ENCODE measurements at regions of chr3 and their contacts with region 1.

Region 1: GRCh38 chr3:43621656-43622432 is at the start of gene ANO10:
- DNase-seq: peak; percentile 85 to 97 (median 95)
- ATAC-seq: peak; percentile 94
- H3K4me3 ChIP-seq: peak within 1 kb of the TSS; percentile 69 to 83
- H3K4me3 Mint-ChIP-seq: peak within 1 kb of the TSS; percentile 87
- H3K27ac ChIP-seq: peak within 1 kb of the TSS; percentile 46
- H3K27ac Mint-ChIP-seq: peak within 1 kb of the TSS; percentile 76
- H3K4me1 ChIP-seq: peaks cover 13% of the 10 kb centered on the region
- H3K4me1 Mint-ChIP-seq: peaks cover 17% of the 10 kb centered on the region
- H3K27me3 ChIP-seq: no peaks in the 10 kb centered on the region
- H3K27me3 Mint-ChIP-seq: no peaks in the 10 kb centered on the region
- CTCF ChIP-seq: no peak
- total RNA-seq, gene ANO10: 6.1 to 7.0 TPM

Region 2: GRCh38 chr3:42012935-42013690 is 1608.7 kb before region 1 on chr3:
- CTCF ChIA-PET with region 1: no interaction called
- POLR2A ChIA-PET with region 1: no interaction called
- intact Hi-C with region 1: loop called in 1 of 2 experiments (anchors 5 kb)
- DNase-seq: peak; percentile 56 to 89 (median 71)
- ATAC-seq: peak; percentile 73
- H3K4me3 ChIP-seq: peak overlapping the region; percentile 85 to 89
- H3K4me3 Mint-ChIP-seq: peak overlapping the region; percentile 91
- H3K27ac ChIP-seq: peak overlapping the region; percentile 72 to 98
- H3K27ac Mint-ChIP-seq: peak overlapping the region; percentile 98
- H3K4me1 ChIP-seq: peaks cover 20% of the 10 kb centered on the region
- H3K4me1 Mint-ChIP-seq: peaks cover 35% of the 10 kb centered on the region
- H3K27me3 ChIP-seq: no peaks in the 10 kb centered on the region
- H3K27me3 Mint-ChIP-seq: no peaks in the 10 kb centered on the region
- CTCF ChIP-seq: no peak

Region 3: DNA sequence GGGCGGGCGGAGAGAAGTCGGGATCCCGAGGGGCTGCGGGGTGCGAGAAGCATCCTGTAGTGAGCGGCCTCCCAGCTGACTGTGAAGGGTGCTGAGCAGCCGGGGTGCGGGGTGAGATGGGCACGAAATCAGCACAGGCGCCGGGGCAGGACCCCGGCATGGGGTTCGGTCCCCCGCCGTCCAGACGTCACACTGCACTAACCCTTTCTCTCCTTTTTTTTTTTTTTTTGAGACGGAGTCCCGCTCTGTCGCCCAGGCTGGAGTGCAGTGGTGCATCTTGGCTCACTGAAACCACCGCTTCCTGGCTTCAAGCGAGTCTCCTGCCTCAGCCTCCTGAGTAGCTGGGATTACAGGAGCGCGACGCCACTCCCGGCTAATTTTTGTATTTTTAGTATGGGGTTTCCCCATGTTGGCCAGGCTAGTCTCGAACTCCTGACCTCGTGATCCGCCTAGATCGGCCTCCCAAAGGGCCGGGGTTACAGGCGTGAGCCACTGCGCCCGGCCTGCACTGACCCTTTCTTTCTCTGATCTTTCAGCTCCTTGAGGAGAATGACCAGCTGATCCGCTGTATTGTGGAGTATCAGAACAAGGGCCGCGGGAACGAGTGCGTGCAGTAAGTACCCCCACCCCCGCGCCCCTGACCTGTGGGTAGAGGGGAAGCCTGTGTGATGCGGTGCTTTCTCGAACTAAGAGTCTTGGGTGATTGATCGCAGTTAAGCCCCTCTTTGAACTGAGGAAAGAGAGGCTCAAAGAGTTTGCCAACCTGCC is 1030.7 kb before region 1 on chr3:
- CTCF ChIA-PET with region 1: no interaction called
- POLR2A ChIA-PET with region 1: no interaction called
- intact Hi-C with region 1: loop called in 1 of 2 experiments (anchors 5 kb)
- DNase-seq: no peak
- ATAC-seq: peak; percentile 27
- H3K4me3 ChIP-seq: peak overlapping the region; percentile 65 to 68
- H3K4me3 Mint-ChIP-seq: peak overlapping the region; percentile 100
- H3K27ac ChIP-seq: peak overlapping the region; percentile 69 to 75
- H3K27ac Mint-ChIP-seq: peak overlapping the region; percentile 99
- H3K4me1 ChIP-seq: peaks cover 25% of the 10 kb centered on the region
- H3K4me1 Mint-ChIP-seq: peaks cover 33% of the 10 kb centered on the region
- H3K27me3 ChIP-seq: no peaks in the 10 kb centered on the region
- H3K27me3 Mint-ChIP-seq: no peaks in the 10 kb centered on the region
- CTCF ChIP-seq: no peak

Region 4: DNA sequence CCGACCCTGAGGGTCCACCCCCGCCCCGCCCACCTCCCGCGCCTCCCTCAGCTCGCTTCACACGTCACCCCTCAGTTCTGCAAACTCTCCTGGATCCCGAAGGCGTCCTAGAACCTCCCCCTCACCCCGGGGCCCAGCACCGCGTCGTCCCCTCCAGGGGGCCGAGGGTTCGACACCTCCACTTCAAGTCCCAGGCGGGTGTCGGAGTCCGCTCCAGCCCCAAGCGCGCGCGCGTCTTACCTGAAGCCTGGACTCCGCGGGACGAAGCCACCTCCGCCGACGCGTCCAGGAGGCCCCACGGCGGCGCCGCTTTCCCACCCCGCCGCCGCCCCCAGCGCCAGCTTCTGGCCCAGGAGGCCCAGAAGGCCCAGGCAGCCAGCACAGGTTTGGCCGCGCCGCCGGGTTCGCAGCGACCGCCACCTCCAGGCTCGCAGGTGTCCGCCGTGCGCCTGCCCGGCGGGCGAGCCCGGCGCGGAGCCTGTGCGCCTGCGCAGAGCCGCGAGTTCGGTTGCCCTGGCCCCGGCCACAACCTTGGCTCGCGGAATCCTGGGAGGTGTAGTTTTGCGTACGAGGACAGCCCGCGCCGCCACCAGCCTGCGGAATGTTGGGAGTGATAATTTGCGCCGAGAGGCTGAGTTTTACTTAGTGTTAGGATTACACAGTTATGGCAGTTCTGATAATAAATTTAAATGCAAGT is 516.1 kb before region 1 on chr3 and contains the start of gene POMGNT2:
- CTCF ChIA-PET with region 1: no interaction called
- POLR2A ChIA-PET with region 1: no interaction called
- intact Hi-C with region 1: loop called in 1 of 2 experiments (anchors 2 kb)
- DNase-seq: peak; percentile 75 to 94 (median 87)
- ATAC-seq: peak; percentile 93
- H3K4me3 ChIP-seq: peak within 1 kb of the TSS; percentile 67 to 75
- H3K4me3 Mint-ChIP-seq: peak within 1 kb of the TSS; percentile 87
- H3K27ac ChIP-seq: peak within 1 kb of the TSS in 1 of 2 experiments; percentile 50
- H3K27ac Mint-ChIP-seq: peak within 1 kb of the TSS; percentile 74
- H3K4me1 ChIP-seq: peaks cover 15% of the 10 kb centered on the region
- H3K4me1 Mint-ChIP-seq: peaks cover 30% of the 10 kb centered on the region
- H3K27me3 ChIP-seq: no peaks in the 10 kb centered on the region
- H3K27me3 Mint-ChIP-seq: no peaks in the 10 kb centered on the region
- CTCF ChIP-seq: no peak
- total RNA-seq, gene POMGNT2: 9.8 to 11.0 TPM

Region 5: GRCh38 chr3:43690400-43691119 is 68.7 kb after region 1 on chr3 and contains the start of gene ABHD5:
- CTCF ChIA-PET with region 1: no interaction called
- POLR2A ChIA-PET with region 1: interaction called, 9 read pairs
- intact Hi-C with region 1: loop called (anchors 1 kb)
- DNase-seq: peak; percentile 93 to 99 (median 96)
- ATAC-seq: peak; percentile 90
- H3K4me3 ChIP-seq: peak within 1 kb of the TSS; percentile 72 to 77
- H3K4me3 Mint-ChIP-seq: peak within 1 kb of the TSS; percentile 91
- H3K27ac ChIP-seq: peak within 1 kb of the TSS; percentile 62 to 83
- H3K27ac Mint-ChIP-seq: peak within 1 kb of the TSS; percentile 91
- H3K4me1 ChIP-seq: peaks cover 15% of the 10 kb centered on the region
- H3K4me1 Mint-ChIP-seq: peaks cover 32% of the 10 kb centered on the region
- H3K27me3 ChIP-seq: no peaks in the 10 kb centered on the region
- H3K27me3 Mint-ChIP-seq: no peaks in the 10 kb centered on the region
- CTCF ChIP-seq: peak; percentile 44
- total RNA-seq, gene ABHD5: 10.3 to 11.4 TPM

Region 6: DNA sequence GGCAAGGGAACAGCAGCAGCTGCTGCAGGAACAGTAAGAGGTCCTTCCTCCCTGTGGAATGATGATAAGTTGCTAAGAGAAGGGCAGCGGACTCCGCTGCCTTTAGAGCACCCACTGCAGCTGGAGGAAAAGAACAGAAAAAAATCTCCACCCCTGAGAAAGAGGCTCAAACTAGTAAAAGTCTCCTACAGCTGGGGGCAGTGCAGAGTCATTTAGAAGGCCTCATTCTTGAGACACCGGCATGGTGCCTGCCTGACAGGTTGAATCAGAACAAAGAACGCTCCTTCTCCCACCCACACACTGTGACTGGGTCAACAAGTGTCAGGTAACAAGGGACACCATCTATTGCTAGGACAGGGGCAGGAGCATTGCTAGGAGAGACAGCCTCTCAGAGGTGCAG is 257.3 kb after region 1 on chr3:
- CTCF ChIA-PET with region 1: no interaction called
- POLR2A ChIA-PET with region 1: no interaction called
- intact Hi-C with region 1: no loop called
- DNase-seq: peak in 1 of 9 experiments; percentile 19
- ATAC-seq: no peak
- H3K4me3 ChIP-seq: no peak overlapping the region
- H3K4me3 Mint-ChIP-seq: no peak overlapping the region
- H3K27ac ChIP-seq: no peak overlapping the region
- H3K27ac Mint-ChIP-seq: no peak overlapping the region
- H3K4me1 ChIP-seq: no peaks in the 10 kb centered on the region
- H3K4me1 Mint-ChIP-seq: no peaks in the 10 kb centered on the region
- H3K27me3 ChIP-seq: no peaks in the 10 kb centered on the region
- H3K27me3 Mint-ChIP-seq: peaks cover 4% of the 10 kb centered on the region
- CTCF ChIP-seq: no peak

Region 7: GRCh38 chr3:44976002-44976815 is 1354.4 kb after region 1 on chr3 and contains the starts of genes EXOSC7 and ZDHHC3:
- CTCF ChIA-PET with region 1: no interaction called
- POLR2A ChIA-PET with region 1: no interaction called
- intact Hi-C with region 1: loop called in 1 of 2 experiments (anchors 5 kb)
- DNase-seq: peak; percentile 75 to 95 (median 86)
- ATAC-seq: peak; percentile 97
- H3K4me3 ChIP-seq: peak within 1 kb of the TSS; percentile 97 to 99
- H3K4me3 Mint-ChIP-seq: peak within 1 kb of the TSS; percentile 93
- H3K27ac ChIP-seq: peak within 1 kb of the TSS; percentile 90 to 94
- H3K27ac Mint-ChIP-seq: peak within 1 kb of the TSS; percentile 95
- H3K4me1 ChIP-seq: peaks cover 37% of the 10 kb centered on the region
- H3K4me1 Mint-ChIP-seq: peaks cover 65% of the 10 kb centered on the region
- H3K27me3 ChIP-seq: no peaks in the 10 kb centered on the region
- H3K27me3 Mint-ChIP-seq: no peaks in the 10 kb centered on the region
- CTCF ChIP-seq: no peak
- total RNA-seq, gene EXOSC7: 35.2 to 39.3 TPM
- total RNA-seq, gene ZDHHC3: 42.2 to 42.4 TPM